PC-9 (cell line): ENCODE measurements at regions of chr17 and their contacts with region 1.

Region 1: GRCh38 chr17:82751571-82752370 is at the start of gene TBCD:
- DNase-seq: peak; percentile 60 to 81
- H3K4me3 ChIP-seq: peak within 1 kb of the TSS; percentile 75
- H3K27ac ChIP-seq: no peak within 1 kb of the TSS
- H3K4me1 ChIP-seq: no peaks in the 10 kb centered on the region
- H3K27me3 ChIP-seq: no peaks in the 10 kb centered on the region
- CTCF ChIP-seq: no peak
- total RNA-seq, gene TBCD: 111 and 115 TPM in 2 replicates

Region 2: GRCh38 chr17:82648166-82648668 is 103.6 kb before region 1 on chr17 and contains the start of gene WDR45B:
- CTCF ChIA-PET with region 1: no interaction called
- POLR2A ChIA-PET with region 1: no interaction called
- intact Hi-C with region 1: loop called (anchors 1 kb)
- DNase-seq: peak; percentile 82 to 95
- H3K4me3 ChIP-seq: peak within 1 kb of the TSS; percentile 79
- H3K27ac ChIP-seq: peak within 1 kb of the TSS; percentile 80
- H3K4me1 ChIP-seq: no peaks in the 10 kb centered on the region; the same call in 1 of the 2 replicates
- H3K27me3 ChIP-seq: no peaks in the 10 kb centered on the region
- CTCF ChIP-seq: no peak
- total RNA-seq, gene WDR45B: 65.1 and 84.9 TPM in 2 replicates